ENCODE measurements at regions of chr6 and their contacts with region 1.

Region 1: GRCh38 chr6:15621203-15622044 is 41.4 kb downstream of the DTNBP1 start:
- DNase-seq: no peak
- H3K4me3 Mint-ChIP-seq: no peak overlapping the region
- H3K27ac Mint-ChIP-seq: peak overlapping the region; percentile 80
- H3K4me1 Mint-ChIP-seq: peaks cover 11% of the 10 kb centered on the region
- H3K27me3 Mint-ChIP-seq: no peaks in the 10 kb centered on the region

Region 2: DNA sequence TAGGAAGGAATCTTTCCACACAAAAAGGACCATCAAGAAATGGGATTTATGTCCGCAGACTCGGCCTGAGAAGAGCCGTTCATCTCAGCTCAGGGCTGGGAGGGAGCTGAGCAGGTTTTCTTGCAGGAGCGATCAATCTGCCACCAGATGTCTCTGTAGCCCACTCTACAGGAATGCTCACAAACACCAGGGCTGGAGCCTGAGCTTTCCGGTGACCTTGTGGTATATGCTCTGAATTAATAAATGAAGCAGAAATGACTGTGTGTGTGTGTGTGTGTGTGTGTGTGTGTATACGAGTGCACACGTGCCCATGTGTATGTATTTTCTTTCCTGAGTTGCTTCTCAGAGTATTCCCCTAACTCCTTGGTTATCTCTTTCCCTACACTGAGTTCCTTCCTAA is 1491.8 kb before region 1 on chr6:
- intact Hi-C with region 1: loop called (anchors 10 kb)
- DNase-seq: peak; percentile 72
- H3K4me3 Mint-ChIP-seq: no peak overlapping the region
- H3K27ac Mint-ChIP-seq: peak overlapping the region; percentile 58
- H3K4me1 Mint-ChIP-seq: peaks cover 35% of the 10 kb centered on the region
- H3K27me3 Mint-ChIP-seq: no peaks in the 10 kb centered on the region

Region 3: GRCh38 chr6:14542670-14543366 is 1078.6 kb before region 1 on chr6:
- intact Hi-C with region 1: loop called (anchors 10 kb)
- DNase-seq: peak; percentile 74
- H3K4me3 Mint-ChIP-seq: peak overlapping the region; percentile 17
- H3K27ac Mint-ChIP-seq: peak overlapping the region; percentile 59
- H3K4me1 Mint-ChIP-seq: peaks cover 25% of the 10 kb centered on the region
- H3K27me3 Mint-ChIP-seq: peaks cover 2% of the 10 kb centered on the region

Region 4: DNA sequence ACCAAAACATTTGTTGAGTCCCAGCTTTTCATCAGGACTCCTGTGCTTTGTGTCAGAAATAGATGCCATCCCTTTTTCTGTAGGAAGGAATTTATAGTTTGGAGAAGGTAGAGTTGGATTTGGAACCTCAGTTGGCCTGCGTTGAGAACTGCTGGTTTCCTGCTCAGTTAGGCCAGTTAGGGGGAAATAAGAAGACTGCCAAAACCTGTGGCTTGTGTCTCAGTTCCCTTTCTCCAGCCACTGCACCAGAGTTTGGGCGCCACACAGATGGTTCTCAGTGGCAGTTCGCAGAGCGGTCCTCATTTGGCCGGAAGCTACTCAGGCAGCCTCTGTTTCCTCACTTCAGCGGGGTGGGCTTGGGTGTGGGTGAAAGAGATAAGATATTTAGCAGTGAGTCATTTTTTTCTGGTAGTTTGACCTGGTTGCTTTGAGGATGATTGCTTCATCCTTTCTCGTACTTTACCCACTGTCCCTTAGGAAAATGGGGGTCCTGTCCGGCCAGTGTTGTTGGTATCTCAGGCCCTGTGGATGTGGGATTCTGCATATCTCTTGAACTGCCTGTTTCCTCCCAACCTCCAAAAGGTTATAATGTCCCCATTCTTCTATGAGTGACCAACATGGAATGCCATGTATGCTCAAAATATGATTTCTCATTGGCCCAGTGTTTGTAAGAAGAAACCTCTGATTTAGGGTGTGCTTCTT is 321.8 kb before region 1 on chr6:
- intact Hi-C with region 1: loop called (anchors 10 kb)
- DNase-seq: peak; percentile 74
- H3K4me3 Mint-ChIP-seq: peak overlapping the region; percentile 20
- H3K27ac Mint-ChIP-seq: peak overlapping the region; percentile 65
- H3K4me1 Mint-ChIP-seq: peaks cover 68% of the 10 kb centered on the region
- H3K27me3 Mint-ChIP-seq: no peaks in the 10 kb centered on the region

Region 5: GRCh38 chr6:15522427-15522826 is 99.0 kb before region 1 on chr6:
- intact Hi-C with region 1: loop called (anchors 5 kb)
- DNase-seq: no peak
- H3K4me3 Mint-ChIP-seq: no peak overlapping the region
- H3K27ac Mint-ChIP-seq: peak overlapping the region; percentile 49
- H3K4me1 Mint-ChIP-seq: peaks cover 19% of the 10 kb centered on the region
- H3K27me3 Mint-ChIP-seq: no peaks in the 10 kb centered on the region

Measured in activated CD4-positive, alpha-beta T cell treated with anti-CD3 and anti-CD28 coated beads, Interleukin-2, amount 10 ng/mL, durations not matched to agents 24 days and 14 days (primary cell).